Mucosa of descending colon (tissue), 3 donors: ENCODE measurements at regions of chr11 and their contacts with region 1.

Region 1: DNA sequence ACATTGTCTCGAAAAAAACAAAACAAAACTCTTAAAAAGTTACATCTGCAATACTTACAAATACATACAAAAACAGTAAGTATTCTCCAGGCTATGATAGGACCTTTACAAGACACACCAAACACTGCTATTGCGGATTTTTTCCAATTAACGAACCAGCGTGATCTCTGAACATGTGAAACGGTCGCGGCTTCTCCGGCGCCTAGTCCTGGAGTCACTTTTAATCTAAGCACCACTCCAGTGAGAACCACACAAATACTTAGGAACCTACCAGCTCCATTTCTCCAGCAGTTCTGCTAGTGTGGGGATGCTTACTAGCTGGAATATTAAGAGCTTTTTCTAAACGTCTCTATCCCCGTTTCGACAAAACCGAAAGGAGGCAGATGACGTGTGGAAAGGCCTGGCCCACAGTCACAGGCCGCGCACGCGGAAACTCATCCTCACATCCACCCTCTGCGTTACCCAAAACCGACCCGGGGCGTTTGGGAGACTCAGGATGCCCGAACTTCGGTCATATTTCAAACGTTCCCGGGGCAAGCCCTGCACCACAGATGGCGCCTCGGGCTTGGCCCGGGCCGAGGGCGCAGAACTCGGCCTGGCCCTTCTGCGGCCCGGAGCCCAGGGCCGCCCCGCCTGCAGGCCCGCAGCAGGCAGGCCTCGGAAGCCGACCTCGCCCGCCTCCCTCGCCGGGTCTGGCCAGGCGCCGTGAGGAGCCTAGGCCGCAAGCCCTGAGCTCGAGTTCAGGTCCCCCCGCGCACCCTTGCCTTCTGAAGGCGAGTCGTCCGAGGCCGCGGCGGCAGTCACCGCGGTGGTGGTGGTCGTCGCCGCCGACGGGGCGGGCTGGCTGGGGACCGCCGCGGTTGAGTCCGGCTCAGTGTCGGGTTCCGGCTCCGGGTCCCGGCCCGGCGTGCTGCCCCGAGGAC is 575 bp downstream of the FNBP4 start:
- DNase-seq: peak; percentile 80 to 88 (median 82)
- ATAC-seq: peak; percentile 64
- H3K4me3 ChIP-seq: peak overlapping the region; percentile 83
- H3K4me1 ChIP-seq: peaks cover 7% of the 10 kb centered on the region
- CTCF ChIP-seq: no peak

Region 2: DNA sequence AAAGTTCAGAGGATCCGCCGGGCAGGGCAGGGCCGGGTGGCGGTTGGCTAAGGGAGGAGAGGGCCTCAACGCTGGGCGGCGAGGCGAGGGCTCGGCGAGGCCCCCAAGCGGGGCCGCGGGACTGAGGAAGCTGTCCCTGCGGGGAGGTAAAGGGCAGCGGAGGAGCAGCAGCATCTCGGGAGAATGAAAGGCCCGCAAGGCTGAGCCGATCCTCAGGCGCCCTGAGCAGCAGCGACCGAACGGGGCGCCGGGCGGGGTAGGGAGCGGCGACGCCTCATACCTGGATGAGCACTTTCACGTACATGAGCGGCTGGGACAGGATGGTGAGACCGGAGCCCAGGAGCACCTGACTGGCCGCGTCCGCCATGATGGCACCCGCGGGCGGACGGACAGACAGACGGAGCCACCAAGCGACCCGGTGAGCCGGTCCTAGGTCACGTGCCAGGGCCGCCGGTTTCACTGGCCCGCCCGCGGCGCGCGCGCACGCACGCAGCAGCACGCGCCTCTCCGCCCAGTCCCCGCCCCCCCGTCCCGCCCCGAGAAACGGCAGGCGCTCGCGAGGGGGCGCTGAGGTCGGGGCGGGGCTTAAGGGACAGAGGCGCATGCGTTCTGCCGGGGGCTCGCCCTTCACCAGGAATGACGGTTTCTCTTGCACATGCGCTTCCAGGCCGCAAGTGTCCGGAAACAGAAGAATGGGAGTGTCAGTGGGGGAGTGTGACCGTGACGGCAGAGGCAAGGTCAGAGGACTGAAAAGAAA is 124.3 kb before region 1 on chr11 and contains the start of gene MTCH2:
- intact Hi-C with region 1: loop called in 1 of 2 experiments (anchors 5 kb)
- DNase-seq: peak; percentile 96 to 98 (median 97)
- ATAC-seq: peak; percentile 99
- H3K4me3 ChIP-seq: peak within 1 kb of the TSS; percentile 65
- H3K4me1 ChIP-seq: peaks cover 10% of the 10 kb centered on the region
- CTCF ChIP-seq: peak; percentile 55
- total RNA-seq, gene MTCH2: 89.7 to 137 (median 126) TPM

Region 3: DNA sequence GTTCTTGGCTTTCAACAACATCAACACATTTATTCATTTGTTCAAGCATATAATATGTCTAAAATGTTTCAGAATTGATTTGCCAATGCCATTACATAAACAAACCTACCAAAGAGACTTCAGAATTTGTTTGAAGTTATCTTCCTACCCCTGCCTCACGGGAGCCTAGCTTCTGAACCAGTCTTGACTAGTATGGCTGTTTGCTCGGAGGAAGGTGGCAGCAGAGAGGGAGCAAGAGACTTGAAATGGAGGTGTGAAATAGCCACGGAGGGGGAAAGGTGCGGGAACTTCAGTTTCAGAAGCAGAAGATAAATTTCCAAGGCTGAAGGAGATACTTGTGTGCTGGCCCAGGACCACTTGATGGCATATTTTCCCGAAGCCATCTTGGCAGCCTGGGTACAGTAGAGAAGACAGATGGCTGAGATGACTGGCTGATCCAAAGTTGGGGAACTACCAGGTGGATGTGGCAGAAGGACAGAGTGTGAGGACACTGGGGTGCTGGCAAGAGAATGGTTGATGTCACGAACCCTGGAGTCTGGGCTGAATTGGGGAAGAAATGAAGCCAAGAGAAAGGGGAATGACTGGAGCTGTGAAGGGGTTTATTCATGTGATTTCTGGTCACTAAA is 110.2 kb before region 1 on chr11:
- intact Hi-C with region 1: no loop called
- DNase-seq: no peak
- ATAC-seq: no peak
- H3K4me3 ChIP-seq: no peak overlapping the region
- H3K4me1 ChIP-seq: no peaks in the 10 kb centered on the region
- CTCF ChIP-seq: no peak

Region 4: GRCh38 chr11:48129697-48130395 is 363.3 kb after region 1 on chr11:
- intact Hi-C with region 1: no loop called
- DNase-seq: no peak
- ATAC-seq: peak; percentile 77
- H3K4me3 ChIP-seq: no peak overlapping the region
- H3K4me1 ChIP-seq: no peaks in the 10 kb centered on the region
- CTCF ChIP-seq: no peak